ENCODE measurements at regions of chr15 and their contacts with region 1.

Region 1: DNA sequence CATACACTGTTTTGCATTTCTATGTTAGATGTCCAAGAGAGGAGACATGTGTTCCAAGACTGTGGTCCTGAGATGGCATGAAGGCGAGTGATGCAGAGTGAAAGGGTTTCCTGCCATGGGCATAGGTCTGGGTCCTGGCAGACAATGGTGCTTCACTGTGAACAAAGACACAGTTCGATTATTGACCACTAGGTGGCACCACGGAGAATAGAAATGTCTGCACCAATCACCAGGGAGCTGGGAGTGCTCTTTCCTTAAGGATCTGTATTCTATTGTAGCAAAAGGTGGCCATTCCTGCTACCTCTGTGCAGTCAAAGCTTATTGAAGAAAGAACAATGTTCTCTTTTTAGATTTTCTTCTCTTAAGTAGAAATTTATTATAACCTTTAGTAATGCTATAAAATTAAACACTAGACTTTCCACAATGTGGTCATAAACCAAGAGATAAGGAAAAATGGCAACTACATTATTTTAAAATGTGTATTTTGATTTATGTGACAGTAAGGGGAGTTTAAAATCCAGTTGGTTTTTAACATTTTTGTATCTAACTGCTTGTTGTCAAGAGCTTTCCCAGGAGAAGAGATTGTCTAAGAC is 88.7 kb downstream of the GABRG3 start:
- DNase-seq: peak; percentile 30
- CTCF ChIP-seq: peak; percentile 40

Region 2: DNA sequence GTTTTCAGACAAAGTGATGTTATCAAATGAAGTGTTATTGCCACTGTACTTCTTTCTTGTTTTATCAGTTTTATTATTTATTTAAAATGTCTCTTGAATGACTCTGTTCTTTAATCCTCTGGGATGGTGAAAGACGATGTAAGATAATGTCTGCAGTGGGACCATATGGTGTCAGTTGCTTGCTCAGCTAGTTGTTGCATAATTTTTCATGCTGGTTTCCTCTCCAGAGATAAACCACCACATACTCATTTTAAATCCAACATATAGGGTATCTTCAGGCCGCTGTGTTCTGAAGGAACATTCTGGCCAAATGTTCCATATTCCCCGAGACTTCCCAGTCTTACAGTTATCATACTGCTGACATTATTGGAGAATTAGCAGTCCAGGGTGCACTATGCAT is 12.8 kb before region 1 on chr15:
- CTCF ChIA-PET with region 1: interaction called, 12 read pairs
- POLR2A ChIA-PET with region 1: no interaction called
- DNase-seq: no peak
- CTCF ChIP-seq: no peak

Region 3: GRCh38 chr15:27070841-27071240 is 11.1 kb after region 1 on chr15:
- CTCF ChIA-PET with region 1: interaction called, 13 read pairs
- POLR2A ChIA-PET with region 1: no interaction called
- DNase-seq: no peak
- CTCF ChIP-seq: no peak

Region 4: DNA sequence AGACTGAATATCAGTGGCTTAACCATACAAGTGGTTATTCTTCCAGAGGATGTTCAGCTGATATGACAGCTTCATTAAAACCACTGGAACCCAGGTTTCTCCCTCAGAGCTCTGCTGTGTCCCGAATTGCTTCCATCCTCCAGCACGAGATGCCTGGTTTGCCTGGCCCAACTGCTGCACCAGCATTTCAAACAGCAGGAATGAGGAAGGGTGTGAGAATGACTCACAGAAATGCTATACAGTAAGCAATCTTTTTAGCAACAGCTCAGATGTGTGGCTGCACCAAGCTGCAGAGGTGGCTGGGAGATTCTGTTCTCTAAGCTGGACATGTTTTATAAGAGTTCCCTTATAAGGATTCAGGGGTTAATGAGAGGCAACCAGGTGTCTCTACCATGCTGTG is 182.2 kb after region 1 on chr15:
- CTCF ChIA-PET with region 1: no interaction called
- POLR2A ChIA-PET with region 1: no interaction called
- DNase-seq: no peak
- CTCF ChIP-seq: no peak

Measured in GM10248 (cell line).